ENCODE measurements at regions of chr5 and their contacts with region 1.

Region 1: DNA sequence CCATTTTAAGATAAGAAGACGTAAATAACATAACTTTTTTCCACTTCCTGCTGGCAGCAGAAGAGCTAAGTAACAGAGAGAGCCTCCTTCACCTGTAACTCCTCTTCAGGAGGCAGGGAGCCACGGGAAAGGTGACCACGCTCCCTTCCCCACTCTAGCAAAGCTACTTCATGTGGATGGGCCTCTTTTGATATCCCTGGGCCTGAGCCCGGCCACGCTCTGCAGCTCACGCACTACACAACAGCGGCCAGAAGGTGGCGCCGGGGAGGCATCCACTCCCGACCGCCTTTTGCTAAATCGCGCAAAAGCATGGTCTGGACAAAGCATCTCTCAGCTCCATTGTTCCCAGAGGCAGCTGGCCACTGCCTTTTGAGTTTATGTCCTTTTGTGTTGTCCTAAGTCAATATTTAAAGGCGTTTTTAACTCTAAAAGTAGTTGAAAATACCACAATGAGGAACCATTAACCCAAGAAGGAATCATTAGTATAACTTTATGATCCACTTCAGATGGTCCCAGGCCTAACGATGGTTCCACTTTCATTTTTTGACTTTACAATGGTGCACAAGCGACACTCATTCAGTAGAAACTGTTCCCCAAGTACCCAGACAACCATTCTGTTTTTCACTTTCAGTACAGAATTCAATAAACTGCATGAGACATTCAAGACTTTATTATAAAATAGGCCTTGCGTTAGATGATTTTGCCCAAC is 23.6 kb downstream of the CMBL start:
- DNase-seq: peak; percentile 65
- H3K4me3 Mint-ChIP-seq: no peak overlapping the region
- H3K27ac Mint-ChIP-seq: no peak overlapping the region
- H3K4me1 Mint-ChIP-seq: peaks cover 10% of the 10 kb centered on the region
- H3K27me3 Mint-ChIP-seq: no peaks in the 10 kb centered on the region

Region 2: GRCh38 chr5:10364186-10364683 is 80.2 kb after region 1 on chr5:
- intact Hi-C with region 1: loop called (anchors 1 kb)
- DNase-seq: no peak
- H3K4me3 Mint-ChIP-seq: no peak overlapping the region
- H3K27ac Mint-ChIP-seq: no peak overlapping the region
- H3K4me1 Mint-ChIP-seq: peaks cover 31% of the 10 kb centered on the region
- H3K27me3 Mint-ChIP-seq: no peaks in the 10 kb centered on the region

Region 3: DNA sequence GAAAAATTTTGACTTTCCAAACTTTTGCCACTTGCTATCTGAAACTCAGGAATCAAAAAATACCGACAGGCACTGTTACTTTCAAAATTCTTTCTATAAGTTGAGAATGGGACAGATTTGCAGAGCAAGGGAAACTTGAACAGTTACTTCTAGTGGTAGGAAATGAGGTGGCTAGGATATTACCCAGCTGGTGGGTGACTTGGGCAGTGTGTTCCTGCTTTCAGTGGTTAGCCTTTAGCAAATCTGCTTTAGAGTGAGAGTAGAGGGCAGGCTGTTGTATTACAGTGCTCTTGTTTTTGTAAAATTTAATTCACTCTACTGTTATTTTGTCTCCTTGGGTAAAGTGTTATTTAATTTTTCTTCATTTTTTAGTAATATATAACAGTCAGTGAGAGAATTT is 117.4 kb after region 1 on chr5:
- intact Hi-C with region 1: no loop called
- DNase-seq: no peak
- H3K4me3 Mint-ChIP-seq: no peak overlapping the region
- H3K27ac Mint-ChIP-seq: no peak overlapping the region
- H3K4me1 Mint-ChIP-seq: peaks cover 9% of the 10 kb centered on the region
- H3K27me3 Mint-ChIP-seq: no peaks in the 10 kb centered on the region

Region 4: GRCh38 chr5:10424124-10424731 is 140.1 kb after region 1 on chr5:
- intact Hi-C with region 1: loop called (anchors 2 kb)
- DNase-seq: no peak
- H3K4me3 Mint-ChIP-seq: no peak overlapping the region
- H3K27ac Mint-ChIP-seq: no peak overlapping the region
- H3K4me1 Mint-ChIP-seq: peaks cover 19% of the 10 kb centered on the region
- H3K27me3 Mint-ChIP-seq: no peaks in the 10 kb centered on the region

Measured in activated T-helper 2 cell treated with anti-CD3 and anti-CD28 coated beads, Interferon-gamma antibody, Interleukin-2, Interleukin-4, amounts not matched to agents 10 μg/mL and 5 μg/mL and 100 μg/mL, durations not matched to agents 14 hours and 24 hours and 36 hours (primary cell).